Left lung (tissue), 14 donors: ENCODE measurements at regions of chr14 and their contacts with region 1.

Region 1: GRCh38 chr14:21014761-21015190 is 10.1 kb downstream of the NDRG2 start:
- DNase-seq: peak in 3 of 4 donors; percentile 70 to 92 (median 88)
- ATAC-seq: peak; percentile 97
- H3K4me3 ChIP-seq: no peak overlapping the region
- H3K27ac ChIP-seq: no peak overlapping the region
- H3K4me1 ChIP-seq: peaks cover 0 to 13% of the 10 kb centered on the region in 2 donors
- H3K27me3 ChIP-seq: no peaks in the 10 kb centered on the region
- CTCF ChIP-seq: peak; percentile 84 to 95

Region 2: DNA sequence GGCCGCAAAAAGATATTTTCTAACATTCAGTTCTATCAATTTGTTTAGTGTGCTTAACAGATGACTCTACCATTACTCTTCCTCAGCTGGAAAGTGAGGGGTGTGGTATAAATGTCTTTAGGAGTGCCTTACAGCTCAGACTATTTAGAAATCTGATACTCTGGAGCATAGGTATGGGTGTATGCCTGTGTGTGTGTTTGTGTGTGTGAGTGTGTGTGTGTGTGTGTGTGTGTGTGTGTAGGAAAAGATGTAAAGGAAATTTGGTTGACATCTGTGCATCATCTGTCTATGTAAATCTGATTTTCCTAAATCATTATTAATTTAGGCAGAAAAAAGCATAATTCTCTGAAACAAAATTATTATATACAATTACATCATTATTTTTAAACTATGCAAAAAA is 107.6 kb before region 1 on chr14:
- intact Hi-C with region 1: no loop called
- DNase-seq: no peak
- ATAC-seq: no peak
- H3K4me3 ChIP-seq: no peak overlapping the region
- H3K27ac ChIP-seq: no peak overlapping the region
- H3K4me1 ChIP-seq: peaks cover 0 to 17% of the 10 kb centered on the region in 2 donors
- H3K27me3 ChIP-seq: no peaks in the 10 kb centered on the region
- CTCF ChIP-seq: no peak

Region 3: DNA sequence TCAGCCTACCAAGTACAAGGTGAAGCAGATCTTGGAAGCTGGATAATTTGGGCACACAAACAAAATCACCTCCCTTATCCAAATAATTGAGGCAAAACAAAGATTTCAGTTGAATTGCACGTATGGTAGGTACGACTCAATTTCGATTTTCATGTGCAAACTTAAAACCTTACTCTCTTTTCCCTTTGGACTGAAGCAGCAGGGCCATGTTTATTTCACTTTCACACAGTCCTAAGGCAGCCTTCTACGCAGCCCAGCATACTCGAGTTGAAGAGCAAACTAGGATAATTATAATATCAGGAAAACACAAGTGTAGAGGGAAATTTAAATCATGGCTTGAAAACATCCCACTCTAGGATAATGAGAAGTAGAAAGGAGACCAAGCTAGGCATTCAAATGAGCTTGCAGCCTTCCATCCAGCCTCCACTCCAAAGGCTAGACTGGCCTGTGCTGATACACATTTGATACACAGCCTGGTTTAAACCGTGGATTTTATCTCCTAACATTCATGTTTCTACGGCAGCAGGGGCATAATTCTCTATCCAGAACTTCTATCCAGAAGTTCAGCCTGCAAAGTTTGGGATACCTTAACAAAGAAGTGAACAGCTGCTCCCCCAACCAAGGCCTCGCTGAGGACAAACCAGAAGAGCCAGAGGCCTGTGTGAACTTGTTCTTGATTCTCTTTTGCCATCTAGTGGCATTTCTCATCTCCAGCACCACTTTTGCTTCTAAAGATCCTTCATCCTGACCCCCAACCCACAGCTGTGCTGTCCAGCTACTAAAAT is 25.0 kb after region 1 on chr14:
- intact Hi-C with region 1: loop called in 1 of 2 experiments (anchors 2 kb)
- DNase-seq: peak in 2 of 4 donors; percentile 59 to 81
- ATAC-seq: peak; percentile 71
- H3K4me3 ChIP-seq: no peak overlapping the region
- H3K27ac ChIP-seq: peak overlapping the region; percentile 60 to 69
- H3K4me1 ChIP-seq: peaks cover 24 to 31% of the 10 kb centered on the region in 2 donors
- H3K27me3 ChIP-seq: peaks cover 0 to 5% of the 10 kb centered on the region in 2 donors
- CTCF ChIP-seq: peak; percentile 42 to 46

Region 4: DNA sequence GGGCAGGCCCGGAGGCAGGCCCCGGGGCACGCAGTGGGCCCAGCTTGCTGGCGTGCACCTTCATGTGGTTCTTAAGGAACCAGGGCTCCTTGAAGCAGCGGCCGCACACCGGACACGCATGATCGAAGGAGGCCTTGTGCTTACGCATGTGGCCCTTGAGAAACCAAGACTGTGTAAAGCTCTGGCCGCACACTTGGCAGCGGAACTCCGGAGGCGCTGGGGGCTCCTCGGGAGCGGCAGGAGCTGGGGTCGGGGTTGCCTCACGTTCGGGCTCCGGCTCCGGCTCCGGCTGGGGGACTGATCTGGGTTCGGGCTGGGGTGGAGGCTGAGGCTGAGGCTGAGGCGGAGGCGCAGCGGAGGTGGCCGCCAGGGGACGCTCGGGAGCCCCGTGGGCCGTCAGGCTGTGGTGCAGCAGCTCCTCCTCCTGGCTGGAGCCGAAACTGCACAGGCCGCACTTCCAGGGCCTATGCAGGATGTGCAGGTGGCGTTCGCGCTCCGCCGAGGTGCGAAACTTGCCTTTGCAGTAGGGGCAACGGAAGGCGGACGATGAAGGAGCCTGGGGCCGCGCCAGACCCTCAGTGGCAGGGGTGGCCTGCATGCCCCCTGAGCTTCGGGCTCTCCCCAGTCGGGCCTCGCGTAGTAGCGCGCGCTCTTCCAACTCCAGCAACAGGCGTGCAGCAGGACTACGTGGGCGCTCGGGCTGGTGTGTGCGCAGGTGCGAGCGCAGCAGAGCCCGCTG is 77.7 kb after region 1 on chr14:
- intact Hi-C with region 1: loop called in 1 of 2 experiments (anchors 5 kb)
- DNase-seq: peak; percentile 60 to 98 (median 85)
- ATAC-seq: peak; percentile 97
- H3K4me3 ChIP-seq: no peak overlapping the region
- H3K27ac ChIP-seq: no peak overlapping the region
- H3K4me1 ChIP-seq: peaks cover 0 to 43% of the 10 kb centered on the region in 2 donors
- H3K27me3 ChIP-seq: peaks cover 0 to 2% of the 10 kb centered on the region in 2 donors
- CTCF ChIP-seq: peak; percentile 100